CD4-positive, alpha-beta memory T cell (primary cell): ENCODE measurements at regions of chr5 and their contacts with region 1.

Region 1: GRCh38 chr5:132410451-132411381 is 41.2 kb downstream of the SLC22A5 start:
- DNase-seq: peak; percentile 84 to 91 (median 86)
- H3K4me3 ChIP-seq: peak overlapping the region; percentile 86 to 95
- H3K4me3 Mint-ChIP-seq: peak overlapping the region; percentile 91 to 99 (median 99)
- H3K27ac ChIP-seq: peak overlapping the region; percentile 99
- H3K27ac Mint-ChIP-seq: peak overlapping the region; percentile 99 to 100 (median 99)
- H3K4me1 ChIP-seq: peaks cover 78% of the 10 kb centered on the region
- H3K4me1 Mint-ChIP-seq: peaks cover 61 to 92% (median 75%) of the 10 kb centered on the region in 4 donors
- H3K27me3 ChIP-seq: no peaks in the 10 kb centered on the region
- H3K27me3 Mint-ChIP-seq: no peaks in the 10 kb centered on the region

Region 2: DNA sequence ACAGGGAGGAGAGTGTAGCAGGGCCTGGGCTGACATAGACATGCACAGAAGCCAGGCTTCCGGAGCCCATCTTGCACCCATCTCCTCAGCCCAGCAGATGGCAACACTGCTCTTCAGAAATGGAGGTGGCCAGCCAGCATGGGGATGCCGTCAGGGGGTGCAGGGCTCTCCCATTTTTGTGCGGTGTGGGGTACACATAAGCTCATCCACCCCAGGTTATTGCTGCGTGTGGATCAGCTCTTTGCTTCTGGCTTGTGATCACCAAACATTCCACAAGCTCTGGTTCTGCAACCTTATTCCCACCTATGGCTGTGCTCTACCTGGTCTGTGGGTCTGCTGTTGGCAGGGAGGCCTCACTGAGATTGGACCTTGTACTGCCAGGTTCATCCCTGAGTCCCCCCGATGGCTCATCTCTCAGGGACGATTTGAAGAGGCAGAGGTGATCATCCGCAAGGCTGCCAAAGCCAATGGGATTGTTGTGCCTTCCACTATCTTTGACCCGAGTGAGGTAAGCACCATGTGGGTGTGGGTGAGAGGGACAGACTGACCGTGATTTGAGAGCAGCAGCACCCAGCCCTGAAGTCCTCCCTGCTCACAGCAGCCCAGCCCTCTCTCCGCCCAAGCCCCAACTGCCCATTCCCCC is 24.0 kb before region 1 on chr5:
- CTCF ChIA-PET with region 1: interaction called, 65 read pairs
- POLR2A ChIA-PET with region 1: interaction called, 48 read pairs
- intact Hi-C with region 1: loop called (anchors 1 kb)
- DNase-seq: peak; percentile 75 to 80 (median 78)
- H3K4me3 ChIP-seq: no peak overlapping the region
- H3K4me3 Mint-ChIP-seq: peak overlapping the region in 1 of 8 donors; percentile 36
- H3K27ac ChIP-seq: no peak overlapping the region
- H3K27ac Mint-ChIP-seq: peak overlapping the region; percentile 22 to 88 (median 31)
- H3K4me1 ChIP-seq: peaks cover 20% of the 10 kb centered on the region
- H3K4me1 Mint-ChIP-seq: peaks cover 20 to 53% (median 33%) of the 10 kb centered on the region in 4 donors
- H3K27me3 ChIP-seq: no peaks in the 10 kb centered on the region
- H3K27me3 Mint-ChIP-seq: no peaks in the 10 kb centered on the region

Region 3: DNA sequence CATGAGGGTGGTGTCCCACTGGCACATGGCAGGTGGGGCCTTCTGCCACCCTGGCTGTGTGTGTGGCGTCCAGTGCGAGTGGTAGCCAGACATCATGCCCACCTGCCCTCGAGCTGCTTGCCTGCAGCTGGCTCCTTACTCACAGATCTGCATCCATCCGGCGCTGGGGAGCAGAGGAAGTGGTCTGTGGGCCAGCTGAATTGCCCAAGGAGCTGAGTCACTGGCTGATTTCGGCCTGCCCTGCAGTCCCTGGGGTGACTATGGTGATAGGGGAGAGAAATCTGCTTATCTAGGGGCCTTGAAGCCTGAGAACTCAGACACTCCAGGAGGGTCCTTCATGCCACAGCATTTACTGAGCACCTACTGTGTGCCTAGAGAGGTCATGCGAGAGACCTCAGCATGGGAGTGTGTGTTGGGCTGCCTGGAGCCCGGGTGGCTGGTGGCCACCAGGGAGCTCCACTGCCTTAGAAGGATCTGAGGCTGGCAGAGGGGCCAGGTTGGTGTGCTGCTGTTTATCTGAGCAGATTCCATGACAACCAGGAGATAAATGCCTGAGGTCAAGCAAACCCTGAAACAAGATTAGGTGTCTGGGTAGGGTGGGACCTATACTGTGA is 15.9 kb after region 1 on chr5:
- CTCF ChIA-PET with region 1: interaction called, 39 read pairs
- POLR2A ChIA-PET with region 1: interaction called, 124 read pairs
- intact Hi-C with region 1: loop called (anchors 2 kb)
- DNase-seq: peak; percentile 37 to 83 (median 44)
- H3K4me3 ChIP-seq: peak overlapping the region; percentile 10 to 28
- H3K4me3 Mint-ChIP-seq: peak overlapping the region; percentile 67 to 83 (median 76)
- H3K27ac ChIP-seq: peak overlapping the region; percentile 77
- H3K27ac Mint-ChIP-seq: peak overlapping the region; percentile 96 to 99 (median 98)
- H3K4me1 ChIP-seq: peaks cover 100% of the 10 kb centered on the region
- H3K4me1 Mint-ChIP-seq: peaks cover 80 to 98% (median 94%) of the 10 kb centered on the region in 4 donors
- H3K27me3 ChIP-seq: no peaks in the 10 kb centered on the region
- H3K27me3 Mint-ChIP-seq: no peaks in the 10 kb centered on the region

Region 4: GRCh38 chr5:132446669-132447068 is 36.0 kb after region 1 on chr5:
- CTCF ChIA-PET with region 1: interaction called, 6 read pairs
- POLR2A ChIA-PET with region 1: interaction called, 17 read pairs
- intact Hi-C with region 1: no loop called
- DNase-seq: no peak
- H3K4me3 ChIP-seq: peak overlapping the region in 1 of 2 donors; percentile 7
- H3K4me3 Mint-ChIP-seq: peak overlapping the region; percentile 43 to 81 (median 75)
- H3K27ac ChIP-seq: peak overlapping the region; percentile 5
- H3K27ac Mint-ChIP-seq: peak overlapping the region; percentile 73 to 94 (median 89)
- H3K4me1 ChIP-seq: peaks cover 90% of the 10 kb centered on the region
- H3K4me1 Mint-ChIP-seq: peaks cover 56 to 97% (median 76%) of the 10 kb centered on the region in 4 donors
- H3K27me3 ChIP-seq: no peaks in the 10 kb centered on the region
- H3K27me3 Mint-ChIP-seq: no peaks in the 10 kb centered on the region

Region 5: DNA sequence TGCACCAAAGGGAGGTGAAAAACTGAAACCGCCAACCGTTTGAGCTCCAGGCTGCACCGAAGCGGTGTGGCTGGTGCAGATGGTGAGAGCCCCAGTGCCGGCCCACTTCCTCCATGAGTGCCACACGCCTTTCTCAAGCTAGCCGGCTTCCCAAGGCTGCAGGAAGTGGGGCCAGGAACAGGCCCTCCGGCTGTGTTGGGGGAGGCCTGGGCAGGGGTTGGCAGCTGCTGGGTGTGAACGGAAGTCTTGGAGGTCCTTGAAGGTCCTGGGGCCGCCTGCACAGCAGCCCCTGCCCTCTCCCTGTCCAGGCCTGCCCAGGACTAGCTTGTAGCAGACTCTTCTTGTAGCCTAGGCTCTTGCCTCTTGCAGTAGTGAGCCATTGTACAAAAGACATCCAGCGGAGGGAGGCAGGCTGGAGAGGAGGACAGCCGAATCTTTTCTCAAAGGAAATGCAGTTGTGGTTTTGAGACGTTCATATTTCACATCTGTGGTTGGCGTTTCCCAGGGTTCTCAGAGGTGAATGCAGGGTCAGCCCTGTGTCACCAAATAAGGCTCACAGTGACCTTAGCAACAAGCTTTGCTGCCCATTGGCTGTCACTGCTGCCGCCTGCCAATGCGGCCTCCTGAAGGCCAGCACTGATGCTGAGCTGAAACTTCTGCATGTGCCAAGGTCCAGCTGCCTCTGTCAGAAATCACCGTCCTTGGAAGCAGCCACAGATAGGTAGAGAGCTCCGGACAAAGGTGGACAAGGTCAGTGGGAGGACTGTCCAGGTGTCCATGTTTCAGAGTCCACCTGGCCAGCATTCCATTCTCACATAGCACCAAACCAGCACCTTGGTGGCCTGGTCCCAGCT is 55.9 kb after region 1 on chr5:
- CTCF ChIA-PET with region 1: interaction called, 46 read pairs
- POLR2A ChIA-PET with region 1: interaction called, 110 read pairs
- intact Hi-C with region 1: no loop called
- DNase-seq: peak; percentile 84 to 91 (median 85)
- H3K4me3 ChIP-seq: peak overlapping the region; percentile 2 to 50
- H3K4me3 Mint-ChIP-seq: peak overlapping the region; percentile 66 to 87 (median 83)
- H3K27ac ChIP-seq: peak overlapping the region; percentile 63
- H3K27ac Mint-ChIP-seq: peak overlapping the region; percentile 94 to 98 (median 96)
- H3K4me1 ChIP-seq: peaks cover 99% of the 10 kb centered on the region
- H3K4me1 Mint-ChIP-seq: peaks cover 76 to 100% (median 90%) of the 10 kb centered on the region in 4 donors
- H3K27me3 ChIP-seq: no peaks in the 10 kb centered on the region
- H3K27me3 Mint-ChIP-seq: no peaks in the 10 kb centered on the region

Region 6: GRCh38 chr5:132479111-132479951 is 68.6 kb after region 1 on chr5:
- CTCF ChIA-PET with region 1: interaction called, 28 read pairs
- POLR2A ChIA-PET with region 1: interaction called, 592 read pairs
- intact Hi-C with region 1: no loop called
- DNase-seq: peak in 4 of 5 donors; percentile 24 to 39 (median 30)
- H3K4me3 ChIP-seq: no peak overlapping the region
- H3K4me3 Mint-ChIP-seq: peak overlapping the region in 2 of 8 donors; percentile 30 to 44
- H3K27ac ChIP-seq: peak overlapping the region; percentile 37
- H3K27ac Mint-ChIP-seq: peak overlapping the region; percentile 82 to 97 (median 90)
- H3K4me1 ChIP-seq: peaks cover 92% of the 10 kb centered on the region
- H3K4me1 Mint-ChIP-seq: peaks cover 39 to 94% (median 69%) of the 10 kb centered on the region in 4 donors
- H3K27me3 ChIP-seq: no peaks in the 10 kb centered on the region
- H3K27me3 Mint-ChIP-seq: no peaks in the 10 kb centered on the region

Region 7: DNA sequence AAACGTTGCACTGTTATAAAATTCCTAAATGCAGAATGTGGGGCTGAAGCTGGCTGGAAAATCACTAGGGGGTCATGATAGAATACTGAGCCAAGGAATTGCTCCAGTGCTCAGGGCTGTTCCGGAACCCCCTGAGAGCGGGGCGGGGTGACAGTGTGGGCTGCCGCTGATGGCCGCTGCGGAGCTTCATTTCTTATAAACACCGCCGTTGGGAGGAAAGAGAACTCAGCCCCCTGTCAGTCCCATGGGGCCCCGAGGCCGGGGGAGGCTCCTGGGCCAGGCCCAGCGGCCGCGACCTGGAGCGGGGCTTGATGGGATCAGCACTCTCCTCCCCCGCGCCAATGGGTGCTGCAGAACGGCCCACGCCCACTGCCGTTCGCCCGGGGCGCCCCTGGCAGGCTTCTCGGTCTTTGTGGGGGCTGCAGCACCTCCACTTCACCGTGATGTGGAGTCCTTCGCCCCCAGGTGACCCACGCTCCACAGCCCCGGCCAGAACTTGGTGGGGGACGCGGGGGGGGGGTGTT is 85.0 kb after region 1 on chr5:
- CTCF ChIA-PET with region 1: interaction called, 141 read pairs
- POLR2A ChIA-PET with region 1: interaction called, 592 read pairs
- intact Hi-C with region 1: loop called (anchors 1 kb)
- DNase-seq: peak; percentile 52 to 76 (median 60)
- H3K4me3 ChIP-seq: peak overlapping the region; percentile 25 to 61
- H3K4me3 Mint-ChIP-seq: peak overlapping the region; percentile 93 to 99 (median 96)
- H3K27ac ChIP-seq: peak overlapping the region; percentile 99
- H3K27ac Mint-ChIP-seq: peak overlapping the region; percentile 95 to 99 (median 98)
- H3K4me1 ChIP-seq: peaks cover 83% of the 10 kb centered on the region
- H3K4me1 Mint-ChIP-seq: peaks cover 41 to 92% (median 66%) of the 10 kb centered on the region in 4 donors
- H3K27me3 ChIP-seq: no peaks in the 10 kb centered on the region
- H3K27me3 Mint-ChIP-seq: no peaks in the 10 kb centered on the region